Heart left ventricle (tissue), 16 donors: ENCODE measurements at regions of chr17 and their contacts with region 1.

Region 1: DNA sequence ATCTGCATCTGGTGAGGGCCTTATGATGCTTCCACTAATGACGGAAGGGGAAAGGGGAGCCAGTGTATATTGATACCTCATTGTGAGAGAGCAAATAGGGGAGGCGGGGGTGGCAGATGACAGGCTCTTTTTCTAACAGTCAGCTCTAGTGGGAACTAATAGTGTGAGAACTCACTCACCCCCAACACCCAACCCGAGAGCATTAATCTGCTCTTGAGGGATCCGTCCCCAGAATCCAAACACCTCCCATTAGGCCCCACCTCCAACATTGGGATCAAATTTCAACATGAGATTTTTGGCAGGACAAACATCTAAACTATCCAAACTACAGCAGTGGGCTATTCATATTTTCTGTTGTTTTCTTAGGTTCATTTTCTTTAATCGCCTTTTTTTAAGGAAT is 54.4 kb downstream of the BPTF start:
- DNase-seq: no peak
- ATAC-seq: no peak
- H3K4me3 ChIP-seq: no peak overlapping the region
- H3K27ac ChIP-seq: no peak overlapping the region
- H3K4me1 ChIP-seq: no peaks in the 10 kb centered on the region
- H3K27me3 ChIP-seq: no peaks in the 10 kb centered on the region
- CTCF ChIP-seq: no peak
- POLR2A ChIP-seq: no peak

Region 2: GRCh38 chr17:67818110-67819002 is 61.3 kb before region 1 on chr17:
- intact Hi-C with region 1: loop called in 1 of 10 experiments (anchors 10 kb)
- DNase-seq: no peak
- ATAC-seq: no peak
- H3K4me3 ChIP-seq: no peak overlapping the region
- H3K27ac ChIP-seq: no peak overlapping the region
- H3K4me1 ChIP-seq: no peaks in the 10 kb centered on the region
- H3K27me3 ChIP-seq: peaks cover 0 to 3% (median 0%) of the 10 kb centered on the region in 9 donors
- CTCF ChIP-seq: no peak
- POLR2A ChIP-seq: no peak